ENCODE measurements at regions of chr15 and their contacts with region 1.

Region 1: GRCh38 chr15:60798821-60799220 is 319.9 kb upstream of the ICE2 start:
- DNase-seq: no peak
- H3K4me3 Mint-ChIP-seq: no peak overlapping the region
- H3K27ac Mint-ChIP-seq: peak overlapping the region; percentile 82
- H3K4me1 Mint-ChIP-seq: peaks cover 76% of the 10 kb centered on the region
- H3K27me3 Mint-ChIP-seq: no peaks in the 10 kb centered on the region

Region 2: GRCh38 chr15:60592371-60593169 is 206.3 kb before region 1 on chr15:
- intact Hi-C with region 1: loop called (anchors 1 kb)
- DNase-seq: peak; percentile 84
- H3K4me3 Mint-ChIP-seq: peak overlapping the region; percentile 83
- H3K27ac Mint-ChIP-seq: peak overlapping the region; percentile 68
- H3K4me1 Mint-ChIP-seq: peaks cover 69% of the 10 kb centered on the region
- H3K27me3 Mint-ChIP-seq: peaks cover 2% of the 10 kb centered on the region

Region 3: GRCh38 chr15:60695713-60696522 is 102.9 kb before region 1 on chr15:
- intact Hi-C with region 1: loop called (anchors 1 kb)
- DNase-seq: peak; percentile 48
- H3K4me3 Mint-ChIP-seq: peak overlapping the region; percentile 32
- H3K27ac Mint-ChIP-seq: peak overlapping the region; percentile 75
- H3K4me1 Mint-ChIP-seq: peaks cover 66% of the 10 kb centered on the region
- H3K27me3 Mint-ChIP-seq: no peaks in the 10 kb centered on the region

Region 4: DNA sequence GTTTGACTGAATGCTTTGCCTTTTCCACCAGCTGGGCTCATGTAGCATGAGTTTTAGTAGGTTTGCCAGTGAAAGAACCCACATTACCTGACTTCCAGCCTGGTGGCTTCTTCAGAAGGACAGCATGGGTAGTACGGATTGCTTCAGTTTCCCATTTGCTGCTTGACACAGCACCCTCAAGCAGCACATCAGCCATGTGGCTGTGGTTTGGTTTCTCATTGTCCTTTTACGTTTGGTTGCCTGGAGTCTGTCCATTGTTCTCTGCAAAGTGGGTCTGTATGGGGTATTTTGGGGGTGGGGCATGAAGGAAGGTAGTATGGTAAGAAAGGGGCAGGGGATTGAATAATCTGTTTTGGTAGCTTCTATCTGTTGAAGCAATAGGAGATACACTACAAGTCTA is 92.7 kb before region 1 on chr15:
- intact Hi-C with region 1: no loop called
- DNase-seq: no peak
- H3K4me3 Mint-ChIP-seq: no peak overlapping the region
- H3K27ac Mint-ChIP-seq: no peak overlapping the region
- H3K4me1 Mint-ChIP-seq: peaks cover 33% of the 10 kb centered on the region
- H3K27me3 Mint-ChIP-seq: no peaks in the 10 kb centered on the region

Region 5: GRCh38 chr15:60774829-60775463 is 23.9 kb before region 1 on chr15:
- intact Hi-C with region 1: loop called (anchors 2 kb)
- DNase-seq: no peak
- H3K4me3 Mint-ChIP-seq: peak overlapping the region; percentile 43
- H3K27ac Mint-ChIP-seq: peak overlapping the region; percentile 62
- H3K4me1 Mint-ChIP-seq: peaks cover 24% of the 10 kb centered on the region
- H3K27me3 Mint-ChIP-seq: no peaks in the 10 kb centered on the region

Region 6: GRCh38 chr15:60840306-60840702 is 41.5 kb after region 1 on chr15:
- intact Hi-C with region 1: loop called (anchors 1 kb)
- DNase-seq: no peak
- H3K4me3 Mint-ChIP-seq: peak overlapping the region; percentile 49
- H3K27ac Mint-ChIP-seq: peak overlapping the region; percentile 37
- H3K4me1 Mint-ChIP-seq: peaks cover 66% of the 10 kb centered on the region
- H3K27me3 Mint-ChIP-seq: peaks cover 17% of the 10 kb centered on the region

Measured in activated T-helper 1 cell treated with anti-CD3 and anti-CD28 coated beads, Interleukin-12 subunit alpha, Interleukin-12 subunit beta, Interleukin-2, Interleukin-4 antibody, amounts not matched to agents 30 ng/mL and 10 ng/mL and 1 ng/mL, durations not matched to agents 14 hours and 24 hours and 36 hours (primary cell).